ENCODE measurements at regions of chr2 and their contacts with region 1.

Region 1: DNA sequence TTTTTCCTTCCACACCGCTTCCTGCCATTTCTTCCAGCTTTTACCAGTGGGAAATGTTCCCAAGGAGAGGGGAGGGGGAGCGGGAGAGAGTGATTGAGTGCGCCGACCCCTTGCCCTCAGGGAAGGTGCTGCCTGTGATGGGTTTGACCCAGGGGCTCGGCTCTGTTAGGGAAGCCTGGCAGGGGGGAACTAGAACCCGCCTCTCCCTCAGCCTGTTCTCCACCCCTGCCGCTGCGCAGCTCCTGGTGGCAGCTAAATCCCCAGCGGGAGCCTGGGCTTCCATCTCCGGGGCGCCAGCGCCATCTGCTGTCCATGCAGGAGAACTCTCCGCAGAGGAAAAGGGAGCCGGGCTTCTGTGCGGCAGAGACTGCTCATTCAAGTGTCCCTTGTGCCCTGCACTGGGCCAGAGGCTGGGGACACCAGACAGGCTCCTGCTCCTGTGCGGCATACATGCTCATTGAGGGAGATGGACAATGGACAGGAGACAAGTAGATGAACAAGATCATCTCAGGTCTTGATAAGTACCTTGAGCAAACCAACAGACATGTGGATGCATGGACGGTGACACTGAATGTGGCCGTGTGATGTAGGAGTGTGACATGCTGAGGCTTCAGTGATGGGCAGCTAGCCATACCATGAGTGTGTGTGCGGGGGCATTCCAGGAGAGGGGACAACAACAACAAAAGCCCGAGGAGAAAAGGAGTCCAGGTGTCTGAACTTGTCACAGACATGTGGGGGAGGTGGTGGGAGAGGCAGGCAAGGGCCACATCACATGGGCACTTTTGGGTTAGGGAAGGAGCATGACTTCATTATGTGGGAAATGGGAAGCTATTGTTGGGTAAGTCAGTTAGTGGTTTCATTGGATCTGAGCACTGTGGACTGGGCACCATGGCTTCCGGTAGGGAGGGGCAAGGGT is 13.3 kb downstream of the CHPF start:
- DNase-seq: peak; percentile 85 to 92 (median 89)
- H3K4me3 ChIP-seq: peak overlapping the region; percentile 22
- H3K27ac ChIP-seq: no peak overlapping the region
- H3K4me1 ChIP-seq: no peaks in the 10 kb centered on the region
- H3K27me3 ChIP-seq: no peaks in the 10 kb centered on the region
- CTCF ChIP-seq: peak; percentile 89 to 99 (median 99)
- EP300 ChIP-seq: no peak
- POLR2A ChIP-seq: no peak

Region 2: DNA sequence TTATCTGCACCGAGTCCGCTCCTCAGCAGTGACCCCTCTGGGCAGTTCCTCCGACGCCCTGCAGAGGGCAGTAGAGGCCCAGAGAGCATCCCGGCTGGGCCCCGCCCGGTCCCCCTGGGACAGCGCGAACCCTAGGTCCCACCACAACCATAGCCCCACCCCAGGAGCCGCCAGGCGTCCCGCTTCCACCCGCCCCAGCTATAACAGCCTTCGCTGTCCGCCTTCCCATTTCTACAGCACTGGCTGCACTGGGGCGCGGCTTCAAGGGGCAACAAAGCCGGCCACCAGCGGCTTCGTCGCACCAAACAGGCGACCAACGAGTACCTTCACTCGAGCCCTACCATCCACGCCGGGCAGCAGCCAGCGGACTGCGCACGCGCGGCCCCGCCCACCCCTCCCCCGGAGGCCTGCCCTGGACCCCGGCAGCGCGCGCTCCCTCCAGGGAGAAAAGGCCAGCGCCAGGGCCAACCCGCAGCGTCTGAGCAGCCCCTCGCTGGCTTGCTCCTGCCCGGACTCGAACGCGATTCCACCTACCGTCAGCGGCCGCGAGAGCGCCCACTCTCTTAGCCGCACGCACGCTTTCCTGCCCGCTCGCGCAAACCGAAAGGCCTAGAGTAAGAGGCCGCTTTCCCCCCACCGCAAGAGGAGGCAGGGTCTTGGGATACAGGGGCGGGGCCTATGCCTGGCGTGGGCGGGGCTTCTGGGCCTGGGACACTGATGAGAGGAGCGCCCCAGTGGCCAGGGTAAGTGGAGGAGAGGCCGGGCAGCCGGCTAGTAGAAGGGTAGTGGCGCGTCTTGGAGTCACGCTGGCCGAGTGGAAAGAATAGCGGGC is 369.9 kb before region 1 on chr2 and contains the start of gene NHEJ1:
- intact Hi-C with region 1: loop called in 1 of 4 experiments (anchors 10 kb)
- DNase-seq: peak; percentile 97 to 99 (median 98)
- H3K4me3 ChIP-seq: peak within 1 kb of the TSS; percentile 66
- H3K27ac ChIP-seq: peak within 1 kb of the TSS; percentile 87 to 93
- H3K4me1 ChIP-seq: peaks cover 5% of the 10 kb centered on the region
- H3K27me3 ChIP-seq: no peaks in the 10 kb centered on the region
- CTCF ChIP-seq: peak; percentile 94 to 99 (median 95)
- EP300 ChIP-seq: no peak
- POLR2A ChIP-seq: peak; percentile 62
- total RNA-seq, gene NHEJ1: 14.7 to 19.1 (median 17.1) TPM

Region 3: GRCh38 chr2:219387284-219388126 is 142.8 kb before region 1 on chr2 and contains the start of gene DNPEP:
- intact Hi-C with region 1: no loop called
- DNase-seq: peak; percentile 84 to 98 (median 97)
- H3K4me3 ChIP-seq: peak within 1 kb of the TSS; percentile 94
- H3K27ac ChIP-seq: peak within 1 kb of the TSS; percentile 50 to 84
- H3K4me1 ChIP-seq: peaks cover 6% of the 10 kb centered on the region
- H3K27me3 ChIP-seq: no peaks in the 10 kb centered on the region
- CTCF ChIP-seq: peak in 1 of 3 donors; percentile 6
- EP300 ChIP-seq: no peak
- POLR2A ChIP-seq: peak; percentile 40
- total RNA-seq, gene DNPEP: 34.7 to 72.9 (median 66.4) TPM

Region 4: GRCh38 chr2:219475697-219476651 is 54.3 kb before region 1 on chr2:
- intact Hi-C with region 1: loop called in 3 of 4 experiments (anchors 2 to 10 kb)
- DNase-seq: peak; percentile 68 to 86 (median 82)
- H3K4me3 ChIP-seq: no peak overlapping the region
- H3K27ac ChIP-seq: no peak overlapping the region
- H3K4me1 ChIP-seq: peaks cover 3% of the 10 kb centered on the region
- H3K27me3 ChIP-seq: no peaks in the 10 kb centered on the region
- CTCF ChIP-seq: peak; percentile 76 to 82 (median 80)
- EP300 ChIP-seq: no peak
- POLR2A ChIP-seq: no peak

Measured in ovary (tissue), 10 donors.